Heart right ventricle (tissue), 16 donors: ENCODE measurements at regions of chr20 and their contacts with region 1.

Region 1: DNA sequence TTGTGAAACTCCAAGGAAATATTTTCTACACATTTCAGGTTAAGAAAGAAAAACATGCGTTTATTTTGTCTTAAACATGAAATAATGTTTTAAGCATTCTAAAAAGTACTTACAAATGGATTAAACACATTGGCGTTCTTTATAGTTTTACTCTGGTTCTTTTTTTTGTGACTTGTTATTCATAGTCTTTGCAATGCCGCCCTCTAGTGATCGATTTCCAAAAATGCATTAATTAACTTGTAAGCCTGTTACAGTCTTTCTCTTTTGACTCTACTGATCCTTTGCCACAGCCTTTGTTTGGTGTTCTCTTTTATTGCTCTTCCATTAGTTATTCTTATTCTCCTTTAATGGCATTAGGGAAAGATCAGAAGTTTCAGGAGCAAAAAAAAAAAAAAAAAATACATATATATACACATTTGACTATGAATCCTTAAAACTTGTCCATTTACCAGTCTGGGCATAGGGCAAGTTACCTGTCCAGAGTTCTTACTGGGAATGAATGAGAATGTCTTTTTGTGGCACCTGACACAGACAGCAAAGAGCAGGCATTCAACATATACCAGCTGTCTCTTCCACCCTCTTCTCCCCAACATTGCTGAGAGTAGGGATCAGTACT is 59.9 kb downstream of the MACROD2 start:
- DNase-seq: peak in 1 of 2 donors; percentile 30
- ATAC-seq: no peak
- H3K4me3 ChIP-seq: no peak overlapping the region
- H3K27ac ChIP-seq: no peak overlapping the region
- H3K4me1 ChIP-seq: no peaks in the 10 kb centered on the region
- H3K27me3 ChIP-seq: no peaks in the 10 kb centered on the region
- CTCF ChIP-seq: peak in 8 of 9 donors; percentile 31 to 75 (median 67)

Region 2: DNA sequence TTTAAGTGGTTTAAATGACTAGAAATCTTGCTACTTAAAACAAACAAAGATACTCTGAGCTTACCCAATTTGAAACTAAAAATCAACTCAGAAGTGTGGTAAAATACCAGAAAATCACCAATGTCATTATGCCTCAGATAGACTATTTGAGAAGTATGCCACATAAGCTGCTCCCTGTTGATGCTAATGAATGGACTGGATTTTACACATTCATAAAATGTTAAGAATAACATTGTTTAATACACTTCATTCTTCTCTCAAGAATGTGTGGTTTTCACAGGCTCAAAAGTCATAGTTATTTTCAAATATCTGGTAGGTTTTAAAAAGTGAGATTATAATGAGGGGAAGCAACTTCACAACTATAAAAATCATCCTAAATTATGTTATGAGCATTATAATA is 587.1 kb before region 1 on chr20:
- intact Hi-C with region 1: no loop called
- DNase-seq: no peak
- ATAC-seq: no peak
- H3K4me3 ChIP-seq: no peak overlapping the region
- H3K27ac ChIP-seq: no peak overlapping the region
- H3K4me1 ChIP-seq: peaks cover 0 to 7% (median 0%) of the 10 kb centered on the region in 9 donors
- H3K27me3 ChIP-seq: no peaks in the 10 kb centered on the region
- CTCF ChIP-seq: no peak

Region 3: GRCh38 chr20:13995081-13995694 is 60.0 kb before region 1 on chr20 and contains the start of gene MACROD2:
- intact Hi-C with region 1: loop called in 1 of 10 experiments (anchors 10 kb)
- DNase-seq: peak; percentile 76 to 88
- ATAC-seq: peak; percentile 95 to 100 (median 98)
- H3K4me3 ChIP-seq: peak within 1 kb of the TSS; percentile 8 to 66 (median 64)
- H3K27ac ChIP-seq: peak within 1 kb of the TSS in 5 of 10 donors; percentile 22 to 53 (median 32)
- H3K4me1 ChIP-seq: peaks cover 0 to 10% (median 0%) of the 10 kb centered on the region in 9 donors
- H3K27me3 ChIP-seq: peaks cover 0 to 18% (median 6%) of the 10 kb centered on the region in 7 donors
- CTCF ChIP-seq: peak in 1 of 9 donors; percentile 8
- total RNA-seq, gene MACROD2: 2.6 to 6.4 (median 4.5) TPM

Region 4: DNA sequence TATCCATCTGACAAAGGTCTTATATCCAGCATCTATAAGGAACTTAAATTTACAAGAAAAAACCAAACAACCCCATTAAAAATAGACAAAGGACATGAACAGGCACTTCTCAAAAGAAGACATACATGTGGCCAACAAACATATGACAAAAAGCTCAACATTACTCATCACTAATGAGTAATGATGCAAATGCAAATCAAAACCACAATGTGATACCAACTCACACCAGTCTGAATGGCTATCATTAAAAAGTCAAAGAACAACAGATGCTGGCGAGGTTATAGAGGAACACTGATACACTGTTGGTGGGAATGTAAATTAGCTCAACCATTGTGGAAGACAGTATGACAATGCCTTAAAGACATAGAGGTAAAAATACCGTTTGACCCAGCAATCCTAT is 46.0 kb before region 1 on chr20:
- intact Hi-C with region 1: no loop called
- DNase-seq: no peak
- ATAC-seq: no peak
- H3K4me3 ChIP-seq: no peak overlapping the region
- H3K27ac ChIP-seq: no peak overlapping the region
- H3K4me1 ChIP-seq: no peaks in the 10 kb centered on the region
- H3K27me3 ChIP-seq: no peaks in the 10 kb centered on the region
- CTCF ChIP-seq: no peak